Right lobe of liver (tissue), 6 donors: ENCODE measurements at regions of chr12 and their contacts with region 1.

Region 1: GRCh38 chr12:450438-450837 is 9.3 kb upstream of the B4GALNT3 start:
- DNase-seq: no peak
- ATAC-seq: no peak
- H3K4me3 ChIP-seq: no peak overlapping the region
- H3K27ac ChIP-seq: no peak overlapping the region
- H3K4me1 ChIP-seq: no peaks in the 10 kb centered on the region
- H3K27me3 ChIP-seq: no peaks in the 10 kb centered on the region
- CTCF ChIP-seq: no peak
- POLR2A ChIP-seq: no peak

Region 2: DNA sequence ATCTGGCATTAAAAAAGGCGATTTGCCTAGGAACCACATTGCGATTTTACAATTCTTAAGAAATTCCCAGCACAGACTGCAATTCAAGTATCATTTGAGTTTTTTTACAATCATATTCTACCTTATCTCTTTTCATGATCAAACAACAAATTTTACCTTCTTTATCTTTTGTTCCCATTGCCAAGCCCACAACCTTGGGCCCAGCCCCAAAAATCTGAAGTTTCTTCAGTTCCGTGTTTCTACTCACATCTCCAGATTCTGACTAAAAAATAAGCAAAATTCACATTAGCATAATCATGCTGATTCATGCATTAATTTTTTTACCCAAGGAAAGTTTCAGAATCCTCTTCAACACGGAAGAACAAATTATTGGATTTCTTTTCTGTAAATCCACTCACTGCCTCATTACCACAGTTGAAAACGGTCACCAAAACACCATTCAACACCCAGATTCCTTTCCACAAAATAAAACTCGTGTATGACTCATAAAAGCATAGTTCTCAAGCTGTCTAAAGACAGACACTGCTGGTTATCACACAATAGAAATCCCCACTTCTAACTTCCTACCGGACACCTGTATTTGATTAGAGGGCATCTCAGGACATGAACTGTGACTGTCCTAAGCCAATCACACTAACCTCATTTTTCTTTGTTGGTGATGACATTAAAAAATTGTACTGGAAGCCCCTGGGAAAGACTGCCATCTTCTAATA is 94.0 kb before region 1 on chr12:
- intact Hi-C with region 1: no loop called
- DNase-seq: no peak
- ATAC-seq: no peak
- H3K4me3 ChIP-seq: no peak overlapping the region
- H3K27ac ChIP-seq: no peak overlapping the region
- H3K4me1 ChIP-seq: no peaks in the 10 kb centered on the region
- H3K27me3 ChIP-seq: no peaks in the 10 kb centered on the region
- CTCF ChIP-seq: no peak
- POLR2A ChIP-seq: no peak

Region 3: GRCh38 chr12:546921-547845 is 96.7 kb after region 1 on chr12:
- intact Hi-C with region 1: loop called (anchors 2 to 5 kb)
- DNase-seq: peak; percentile 62 to 79 (median 70)
- ATAC-seq: peak; percentile 74 to 86 (median 83)
- H3K4me3 ChIP-seq: no peak overlapping the region
- H3K27ac ChIP-seq: no peak overlapping the region
- H3K4me1 ChIP-seq: no peaks in the 10 kb centered on the region
- H3K27me3 ChIP-seq: peaks cover 0 to 5% of the 10 kb centered on the region in 2 donors
- CTCF ChIP-seq: peak; percentile 94 to 99 (median 98)
- POLR2A ChIP-seq: no peak